CD8-positive, alpha-beta T cell (primary cell): ENCODE measurements at regions of chr9 and their contacts with region 1.

Region 1: GRCh38 chr9:133485361-133486260 is 6.7 kb upstream of the SLC2A6 start:
- DNase-seq: peak in 2 of 9 experiments; percentile 27 to 51
- ATAC-seq: peak; percentile 54
- H3K4me3 ChIP-seq: no peak overlapping the region
- H3K4me3 Mint-ChIP-seq: peak overlapping the region; percentile 53
- H3K27ac ChIP-seq: no peak overlapping the region
- H3K27ac Mint-ChIP-seq: no peak overlapping the region
- H3K4me1 ChIP-seq: peaks cover 5% of the 10 kb centered on the region
- H3K4me1 Mint-ChIP-seq: peaks cover 6% of the 10 kb centered on the region
- H3K27me3 ChIP-seq: peaks cover 0 to 3% of the 10 kb centered on the region in 2 experiments
- H3K27me3 Mint-ChIP-seq: peaks cover 2% of the 10 kb centered on the region
- CTCF ChIP-seq: no peak

Region 2: GRCh38 chr9:132973713-132974112 is 511.9 kb before region 1 on chr9:
- CTCF ChIA-PET with region 1: no interaction called
- POLR2A ChIA-PET with region 1: no interaction called
- intact Hi-C with region 1: loop called in 1 of 2 experiments (anchors 5 kb)
- DNase-seq: peak in 1 of 9 experiments; percentile 28
- ATAC-seq: peak; percentile 41
- H3K4me3 ChIP-seq: no peak overlapping the region
- H3K4me3 Mint-ChIP-seq: no peak overlapping the region
- H3K27ac ChIP-seq: no peak overlapping the region
- H3K27ac Mint-ChIP-seq: no peak overlapping the region
- H3K4me1 ChIP-seq: peaks cover 3% of the 10 kb centered on the region
- H3K4me1 Mint-ChIP-seq: peaks cover 4% of the 10 kb centered on the region
- H3K27me3 ChIP-seq: peaks cover 6 to 8% of the 10 kb centered on the region in 2 experiments
- H3K27me3 Mint-ChIP-seq: peaks cover 19% of the 10 kb centered on the region
- CTCF ChIP-seq: no peak

Region 3: GRCh38 chr9:133103183-133103986 is 382.2 kb before region 1 on chr9:
- CTCF ChIA-PET with region 1: no interaction called
- POLR2A ChIA-PET with region 1: no interaction called
- intact Hi-C with region 1: loop called in 1 of 2 experiments (anchors 1 kb)
- DNase-seq: peak; percentile 38 to 80 (median 59)
- ATAC-seq: peak; percentile 79
- H3K4me3 ChIP-seq: no peak overlapping the region
- H3K4me3 Mint-ChIP-seq: no peak overlapping the region
- H3K27ac ChIP-seq: peak overlapping the region in 1 of 2 experiments; percentile 50
- H3K27ac Mint-ChIP-seq: peak overlapping the region; percentile 33
- H3K4me1 ChIP-seq: no peaks in the 10 kb centered on the region
- H3K4me1 Mint-ChIP-seq: no peaks in the 10 kb centered on the region
- H3K27me3 ChIP-seq: no peaks in the 10 kb centered on the region
- H3K27me3 Mint-ChIP-seq: no peaks in the 10 kb centered on the region
- CTCF ChIP-seq: peak; percentile 83

Region 4: GRCh38 chr9:133238851-133239532 is 246.6 kb before region 1 on chr9:
- CTCF ChIA-PET with region 1: interaction called, 7 read pairs
- POLR2A ChIA-PET with region 1: no interaction called
- intact Hi-C with region 1: loop called in 1 of 2 experiments (anchors 2 kb)
- DNase-seq: peak; percentile 26 to 78 (median 67)
- ATAC-seq: peak; percentile 92
- H3K4me3 ChIP-seq: peak overlapping the region; percentile 36 to 50
- H3K4me3 Mint-ChIP-seq: peak overlapping the region; percentile 76
- H3K27ac ChIP-seq: no peak overlapping the region
- H3K27ac Mint-ChIP-seq: no peak overlapping the region
- H3K4me1 ChIP-seq: peaks cover 17% of the 10 kb centered on the region
- H3K4me1 Mint-ChIP-seq: peaks cover 10% of the 10 kb centered on the region
- H3K27me3 ChIP-seq: peaks cover 0 to 7% of the 10 kb centered on the region in 2 experiments
- H3K27me3 Mint-ChIP-seq: peaks cover 13% of the 10 kb centered on the region
- CTCF ChIP-seq: peak; percentile 72

Region 5: DNA sequence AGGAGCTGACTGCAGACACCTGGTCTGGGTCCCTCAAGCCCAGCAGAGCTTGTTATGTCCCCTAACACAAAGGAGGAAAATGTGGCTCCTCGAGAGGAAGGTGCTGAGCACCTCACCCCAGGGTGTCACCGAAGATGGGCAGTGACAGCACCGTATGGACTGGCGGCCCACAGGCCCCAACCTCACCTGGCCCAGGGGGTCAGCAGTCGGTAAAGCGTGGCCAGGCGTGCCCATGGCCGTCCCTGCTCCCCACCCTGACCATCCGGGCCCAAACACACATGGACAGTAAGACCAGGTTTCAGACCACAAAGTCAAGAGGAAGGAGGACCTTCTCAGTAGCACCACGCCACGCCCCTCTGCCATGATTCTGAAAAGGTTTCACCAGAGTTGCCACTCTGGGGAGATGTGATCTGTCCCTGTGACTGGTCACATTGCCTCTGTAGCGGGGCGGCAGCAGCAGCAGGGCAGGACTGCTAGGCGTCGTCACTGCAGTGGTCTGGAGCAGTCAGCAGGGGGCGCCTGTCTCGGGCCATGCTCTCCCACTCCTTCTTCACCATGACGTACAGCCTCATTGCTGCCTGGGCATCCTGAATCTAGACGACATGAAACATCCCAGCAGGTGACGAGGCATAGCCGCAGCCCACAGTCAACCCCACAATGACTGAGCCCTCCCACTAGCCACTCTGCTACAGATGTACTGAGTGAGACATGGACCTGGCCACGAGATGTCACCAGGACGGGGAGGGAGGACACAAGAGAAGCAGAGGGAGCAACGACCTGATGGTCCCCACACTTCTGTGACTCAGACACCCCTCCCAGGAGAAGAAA is 78.9 kb before region 1 on chr9:
- CTCF ChIA-PET with region 1: interaction called, 46 read pairs
- POLR2A ChIA-PET with region 1: no interaction called
- intact Hi-C with region 1: loop called in 1 of 2 experiments (anchors 1 kb)
- DNase-seq: peak; percentile 62 to 87 (median 83)
- ATAC-seq: peak; percentile 91
- H3K4me3 ChIP-seq: no peak overlapping the region
- H3K4me3 Mint-ChIP-seq: no peak overlapping the region
- H3K27ac ChIP-seq: peak overlapping the region in 1 of 2 experiments; percentile 58
- H3K27ac Mint-ChIP-seq: peak overlapping the region; percentile 64
- H3K4me1 ChIP-seq: peaks cover 3% of the 10 kb centered on the region
- H3K4me1 Mint-ChIP-seq: peaks cover 11% of the 10 kb centered on the region
- H3K27me3 ChIP-seq: no peaks in the 10 kb centered on the region
- H3K27me3 Mint-ChIP-seq: no peaks in the 10 kb centered on the region
- CTCF ChIP-seq: peak; percentile 89